Mammary epithelial cell (primary cell): ENCODE measurements at regions of chr5 and their contacts with region 1.

Region 1: GRCh38 chr5:67246108-67246507 is 49.5 kb upstream of the CD180 start:
- DNase-seq: peak; percentile 66
- H3K4me3 ChIP-seq: no peak overlapping the region
- H3K27ac ChIP-seq: peak overlapping the region; percentile 30
- H3K4me1 ChIP-seq: peaks cover 46% of the 10 kb centered on the region
- H3K27me3 ChIP-seq: no peaks in the 10 kb centered on the region
- CTCF ChIP-seq: peak; percentile 50 to 61

Region 2: DNA sequence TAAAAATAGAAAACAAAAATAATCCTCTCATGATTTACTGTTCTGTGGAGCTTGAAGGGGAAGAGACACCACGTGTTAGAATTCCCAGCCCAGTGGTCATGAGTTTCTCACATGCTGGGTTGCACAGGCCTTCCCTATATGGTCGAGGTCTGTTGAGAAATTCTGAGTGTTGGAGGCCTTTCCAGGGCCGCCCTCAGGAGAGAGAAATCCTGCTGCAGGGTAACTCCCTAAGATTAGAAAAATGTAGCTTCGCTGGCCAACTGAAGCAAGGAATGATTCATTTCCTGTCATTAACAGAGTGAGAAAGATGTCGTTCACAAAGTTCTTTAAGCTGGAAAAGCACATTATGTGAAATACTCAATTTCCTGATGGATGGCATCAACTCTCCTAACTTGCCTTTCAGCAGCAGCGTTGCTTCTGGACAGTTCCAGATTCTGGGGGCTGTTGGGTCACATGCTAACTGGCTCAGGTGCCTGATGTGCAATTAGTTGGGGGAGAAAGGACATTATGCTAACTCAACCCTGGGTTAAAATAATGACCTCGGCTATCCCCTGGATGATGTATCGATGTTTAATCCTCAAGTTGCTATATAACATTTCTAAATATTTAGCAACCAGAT is 55.3 kb after region 1 on chr5:
- CTCF ChIA-PET with region 1: interaction called, 4 read pairs
- dilution Hi-C with region 1: no loop called
- in situ Hi-C with region 1: no loop called
- intact Hi-C with region 1: loop called (anchors 1 kb)
- DNase-seq: peak; percentile 89
- H3K4me3 ChIP-seq: no peak overlapping the region
- H3K27ac ChIP-seq: peak overlapping the region; percentile 67
- H3K4me1 ChIP-seq: peaks cover 47% of the 10 kb centered on the region
- H3K27me3 ChIP-seq: no peaks in the 10 kb centered on the region
- CTCF ChIP-seq: no peak

Region 3: DNA sequence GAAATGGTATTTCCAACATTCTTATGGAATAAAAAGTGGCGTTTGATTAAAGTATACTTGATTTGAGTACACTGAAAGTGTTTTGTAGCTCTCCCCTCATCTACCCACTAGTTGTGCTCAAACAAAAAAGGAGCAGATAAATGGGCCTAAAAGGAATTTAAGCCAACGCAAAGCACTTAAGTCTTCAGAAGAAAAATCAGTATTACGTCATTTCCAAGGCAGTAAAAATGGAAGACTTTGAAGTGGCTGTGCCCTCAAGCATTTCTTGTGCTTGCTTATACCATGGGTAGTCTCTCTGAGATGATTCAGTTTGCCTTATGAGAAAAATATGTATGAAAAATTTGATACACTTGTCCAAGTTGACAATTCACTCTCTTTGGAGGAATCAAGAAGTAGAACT is 230.4 kb after region 1 on chr5:
- CTCF ChIA-PET with region 1: no interaction called
- dilution Hi-C with region 1: no loop called
- in situ Hi-C with region 1: loop called in 1 of 2 experiments (anchors 25 kb)
- intact Hi-C with region 1: loop called (anchors 5 kb)
- DNase-seq: peak; percentile 82
- H3K4me3 ChIP-seq: no peak overlapping the region
- H3K27ac ChIP-seq: no peak overlapping the region
- H3K4me1 ChIP-seq: peaks cover 7% of the 10 kb centered on the region
- H3K27me3 ChIP-seq: no peaks in the 10 kb centered on the region
- CTCF ChIP-seq: no peak

Region 4: GRCh38 chr5:67620424-67621397 is 374.6 kb after region 1 on chr5:
- CTCF ChIA-PET with region 1: no interaction called
- dilution Hi-C with region 1: no loop called
- in situ Hi-C with region 1: no loop called
- intact Hi-C with region 1: loop called (anchors 10 kb)
- DNase-seq: peak; percentile 17
- H3K4me3 ChIP-seq: no peak overlapping the region
- H3K27ac ChIP-seq: no peak overlapping the region
- H3K4me1 ChIP-seq: peaks cover 9% of the 10 kb centered on the region
- H3K27me3 ChIP-seq: no peaks in the 10 kb centered on the region
- CTCF ChIP-seq: no peak

Region 5: DNA sequence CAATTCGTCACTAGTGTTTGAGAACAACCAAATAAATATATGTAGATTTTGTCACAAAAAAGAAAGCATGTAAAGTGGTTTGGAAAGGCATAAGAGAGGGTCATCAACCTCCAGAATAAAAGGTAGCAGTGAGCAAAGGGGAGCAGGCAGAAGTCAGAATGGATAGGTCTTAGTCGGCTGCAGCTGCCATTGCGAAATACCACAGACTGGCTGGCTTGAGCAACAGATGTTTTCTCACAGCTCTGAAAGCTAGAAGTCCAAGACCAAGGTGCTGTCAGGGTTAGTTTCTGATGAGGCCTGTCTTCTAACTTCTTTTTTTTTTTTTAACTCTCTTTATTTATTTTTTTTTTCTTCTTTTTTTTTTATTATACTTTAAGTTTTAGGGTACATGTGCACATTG is 761.3 kb after region 1 on chr5:
- CTCF ChIA-PET with region 1: no interaction called
- dilution Hi-C with region 1: no loop called
- in situ Hi-C with region 1: loop called in 1 of 2 experiments (anchors 25 kb)
- intact Hi-C with region 1: no loop called
- DNase-seq: peak; percentile 55
- H3K4me3 ChIP-seq: no peak overlapping the region
- H3K27ac ChIP-seq: no peak overlapping the region
- H3K4me1 ChIP-seq: no peaks in the 10 kb centered on the region
- H3K27me3 ChIP-seq: no peaks in the 10 kb centered on the region
- CTCF ChIP-seq: no peak

Region 6: GRCh38 chr5:68252673-68253623 is 1006.8 kb after region 1 on chr5:
- CTCF ChIA-PET with region 1: no interaction called
- dilution Hi-C with region 1: no loop called
- in situ Hi-C with region 1: loop called (anchors 5 to 25 kb)
- intact Hi-C with region 1: loop called (anchors 1 kb)
- DNase-seq: peak; percentile 59
- H3K4me3 ChIP-seq: no peak overlapping the region
- H3K27ac ChIP-seq: peak overlapping the region; percentile 40
- H3K4me1 ChIP-seq: peaks cover 47% of the 10 kb centered on the region
- H3K27me3 ChIP-seq: no peaks in the 10 kb centered on the region
- CTCF ChIP-seq: peak; percentile 85 to 96